ENCODE measurements at regions of chr3 and their contacts with region 1.

Region 1: GRCh38 chr3:108006077-108006771 is 84.6 kb downstream of the CD47 start:
- DNase-seq: peak; percentile 86 to 92
- H3K4me3 ChIP-seq: peak overlapping the region; percentile 15; the same call in 1 of the 2 replicates
- H3K27ac ChIP-seq: peak overlapping the region; percentile 19; the same call in 1 of the 2 replicates
- H3K4me1 ChIP-seq: peaks cover 42% of the 10 kb centered on the region
- H3K27me3 ChIP-seq: no peaks in the 10 kb centered on the region
- CTCF ChIP-seq: no peak

Region 2: DNA sequence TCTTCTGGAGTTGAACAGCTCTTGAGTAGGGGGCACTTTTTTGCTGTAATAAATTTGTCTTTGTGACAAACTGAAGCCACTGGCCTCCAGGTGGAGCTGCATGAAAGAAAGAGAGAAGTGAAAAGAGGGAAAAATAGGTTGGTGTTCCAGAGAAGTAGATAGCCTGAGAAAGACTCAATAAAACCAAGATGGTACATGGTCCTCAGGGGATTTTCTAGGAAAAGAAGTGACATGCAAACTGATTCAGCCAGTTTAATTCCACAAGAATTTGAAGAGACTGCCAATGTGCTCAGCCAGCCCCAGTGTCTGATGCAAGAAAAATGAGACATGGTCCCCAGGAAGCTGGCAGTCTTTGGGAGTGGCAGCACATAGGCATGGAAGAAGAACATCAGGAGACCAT is 68.1 kb before region 1 on chr3:
- CTCF ChIA-PET with region 1: no interaction called
- POLR2A ChIA-PET with region 1: no interaction called
- intact Hi-C with region 1: loop called (anchors 2 kb)
- DNase-seq: peak; percentile 48 to 58
- H3K4me3 ChIP-seq: no peak overlapping the region
- H3K27ac ChIP-seq: no peak overlapping the region
- H3K4me1 ChIP-seq: no peaks in the 10 kb centered on the region
- H3K27me3 ChIP-seq: no peaks in the 10 kb centered on the region
- CTCF ChIP-seq: peak; percentile 89

Region 3: DNA sequence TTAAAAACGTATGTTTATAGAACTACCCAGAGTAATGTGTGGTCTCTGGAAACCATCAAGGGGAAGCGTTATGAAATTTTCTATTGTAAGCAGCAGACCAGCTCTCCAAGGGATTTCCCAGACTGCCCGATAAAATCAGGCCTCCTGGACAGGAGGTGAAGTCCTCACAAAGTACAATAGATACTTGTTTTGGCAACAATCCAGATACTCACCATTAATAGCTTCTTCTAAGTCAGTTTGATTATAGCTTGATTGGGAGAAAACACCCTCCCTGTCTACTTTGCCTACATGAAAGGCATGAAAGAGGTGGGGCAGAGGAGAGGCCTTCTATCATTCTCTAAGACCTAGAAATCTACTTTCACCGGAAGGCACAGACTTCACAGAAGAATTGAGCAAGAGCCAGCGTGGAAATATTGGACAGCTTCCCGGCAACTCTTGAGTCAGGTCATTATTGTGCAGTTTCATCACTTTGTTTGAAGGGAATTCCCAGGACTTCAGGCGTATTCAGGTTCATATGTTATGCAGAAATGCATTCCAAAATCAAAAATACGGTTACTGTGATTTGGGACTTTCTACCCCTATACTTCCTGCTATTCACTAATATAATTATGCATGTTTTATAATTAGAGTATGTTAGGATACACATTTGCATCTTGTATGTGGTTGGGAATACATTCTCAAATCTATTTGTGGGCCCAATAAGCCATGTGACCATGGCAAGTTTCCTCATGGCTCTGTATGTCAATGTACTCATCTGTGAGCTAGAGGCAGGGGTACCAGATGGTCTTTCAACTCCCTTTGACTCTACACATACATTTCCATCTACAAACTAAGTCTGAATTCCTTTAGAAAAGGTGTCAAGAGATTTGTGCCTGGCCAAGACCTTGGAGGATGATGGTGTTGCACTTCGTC is 18.9 kb before region 1 on chr3:
- CTCF ChIA-PET with region 1: no interaction called
- POLR2A ChIA-PET with region 1: no interaction called
- intact Hi-C with region 1: loop called (anchors 2 kb)
- DNase-seq: peak; percentile 81 to 97
- H3K4me3 ChIP-seq: no peak overlapping the region
- H3K27ac ChIP-seq: peak overlapping the region; percentile 83
- H3K4me1 ChIP-seq: peaks cover 56% of the 10 kb centered on the region
- H3K27me3 ChIP-seq: no peaks in the 10 kb centered on the region
- CTCF ChIP-seq: no peak

Region 4: DNA sequence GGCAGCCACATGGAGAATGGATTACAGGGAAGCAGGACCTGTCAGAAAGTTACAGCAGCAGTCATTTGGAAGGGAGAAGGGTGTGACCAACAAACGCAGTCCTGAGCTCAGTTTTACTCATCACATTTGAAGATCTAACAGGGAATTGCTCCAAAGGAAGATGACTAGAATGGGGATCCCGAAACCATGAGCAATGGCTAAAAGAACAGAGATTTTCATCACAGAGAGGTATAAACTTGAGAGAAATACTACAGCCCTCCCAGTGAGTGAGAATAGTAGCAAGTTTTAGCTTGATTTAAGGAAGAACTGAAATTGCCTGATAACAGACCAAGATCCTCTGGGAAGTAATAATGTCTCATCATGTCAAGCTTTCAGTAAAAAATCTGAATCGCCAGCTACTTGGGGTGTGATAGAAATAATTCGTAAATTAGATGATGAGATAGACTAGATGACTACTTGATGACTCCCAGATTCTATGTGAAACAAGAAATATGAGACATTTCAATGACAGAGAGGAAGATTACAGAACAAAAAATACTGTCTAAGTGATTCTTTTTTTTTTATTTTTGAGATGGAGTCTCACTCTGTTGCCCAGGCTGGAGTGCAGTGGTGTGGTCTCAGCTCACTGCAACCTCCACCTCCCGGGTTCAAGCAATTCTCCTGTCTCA is 67.7 kb after region 1 on chr3:
- CTCF ChIA-PET with region 1: no interaction called
- POLR2A ChIA-PET with region 1: no interaction called
- intact Hi-C with region 1: no loop called
- DNase-seq: no peak
- H3K4me3 ChIP-seq: no peak overlapping the region
- H3K27ac ChIP-seq: no peak overlapping the region
- H3K4me1 ChIP-seq: no peaks in the 10 kb centered on the region
- H3K27me3 ChIP-seq: no peaks in the 10 kb centered on the region
- CTCF ChIP-seq: no peak

Region 5: DNA sequence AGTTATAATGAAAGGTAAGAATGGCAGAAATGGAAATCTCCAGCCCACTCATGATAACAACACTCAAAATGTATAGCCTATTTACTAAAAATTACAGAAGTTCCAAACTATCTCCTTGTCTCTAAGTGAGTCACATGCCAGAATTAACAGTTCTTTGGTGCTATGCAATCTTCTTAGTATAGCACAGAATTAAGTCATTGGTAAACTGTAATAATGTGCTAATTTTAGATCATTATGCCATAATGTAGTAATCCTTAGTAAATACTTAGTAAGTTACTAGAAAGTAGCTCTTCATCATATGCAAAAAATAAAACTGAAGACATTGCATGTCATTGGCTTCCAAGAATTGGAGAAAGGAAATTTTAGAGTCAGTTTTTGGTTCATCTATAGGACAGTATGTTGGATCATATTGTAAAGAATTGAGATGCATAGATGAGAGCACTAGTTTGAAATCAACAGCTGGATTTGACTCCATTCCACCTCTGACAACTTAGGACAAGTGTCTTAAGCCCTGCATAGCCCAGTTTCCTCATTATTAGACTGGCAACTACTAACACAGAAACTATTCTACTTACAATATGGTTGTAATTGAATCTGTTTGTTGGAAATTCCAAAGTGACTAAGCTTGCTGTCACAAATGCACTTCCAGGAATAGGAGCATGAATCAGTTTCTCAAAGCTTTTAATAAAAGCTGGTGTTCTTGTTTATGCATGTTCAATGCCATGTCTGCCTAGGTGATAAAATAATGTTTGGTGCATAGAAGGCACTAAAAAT is 124.7 kb after region 1 on chr3:
- CTCF ChIA-PET with region 1: interaction called, 3 read pairs
- POLR2A ChIA-PET with region 1: no interaction called
- intact Hi-C with region 1: loop called (anchors 1 kb)
- DNase-seq: peak; percentile 15 to 99
- H3K4me3 ChIP-seq: no peak overlapping the region
- H3K27ac ChIP-seq: peak overlapping the region; percentile 84
- H3K4me1 ChIP-seq: peaks cover 46% of the 10 kb centered on the region
- H3K27me3 ChIP-seq: no peaks in the 10 kb centered on the region
- CTCF ChIP-seq: no peak

Region 6: DNA sequence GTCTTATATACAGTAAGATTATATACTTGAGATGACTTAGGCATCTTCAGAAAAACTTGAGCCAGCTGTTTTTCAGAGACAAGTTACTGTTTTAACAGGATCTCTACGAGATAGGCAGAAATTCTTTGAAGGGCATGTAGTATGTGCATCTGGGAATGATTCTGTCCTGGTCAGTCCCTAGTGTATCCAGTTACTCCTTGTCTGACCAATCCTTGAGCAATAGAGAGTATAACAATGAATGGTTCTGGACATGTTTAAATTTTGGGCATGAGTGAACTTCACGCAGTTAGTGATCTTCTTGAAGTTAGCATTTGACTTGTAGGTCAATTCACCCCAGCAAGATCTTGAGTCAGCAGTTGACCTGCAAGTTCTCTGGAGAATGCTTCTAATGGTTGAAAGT is 265.4 kb after region 1 on chr3:
- CTCF ChIA-PET with region 1: no interaction called
- POLR2A ChIA-PET with region 1: no interaction called
- intact Hi-C with region 1: no loop called
- DNase-seq: peak in 1 of 2 experiments; percentile 28
- H3K4me3 ChIP-seq: no peak overlapping the region
- H3K27ac ChIP-seq: no peak overlapping the region
- H3K4me1 ChIP-seq: no peaks in the 10 kb centered on the region
- H3K27me3 ChIP-seq: no peaks in the 10 kb centered on the region
- CTCF ChIP-seq: no peak

Region 7: GRCh38 chr3:108301695-108302404 is 295.6 kb after region 1 on chr3:
- CTCF ChIA-PET with region 1: no interaction called
- POLR2A ChIA-PET with region 1: no interaction called
- intact Hi-C with region 1: loop called (anchors 1 kb)
- DNase-seq: peak in 1 of 2 experiments; percentile 46
- H3K4me3 ChIP-seq: no peak overlapping the region
- H3K27ac ChIP-seq: no peak overlapping the region
- H3K4me1 ChIP-seq: no peaks in the 10 kb centered on the region; the same call in 1 of the 2 replicates
- H3K27me3 ChIP-seq: no peaks in the 10 kb centered on the region
- CTCF ChIP-seq: no peak

Region 8: GRCh38 chr3:108472001-108472591 is 465.9 kb after region 1 on chr3:
- CTCF ChIA-PET with region 1: no interaction called
- POLR2A ChIA-PET with region 1: no interaction called
- intact Hi-C with region 1: loop called (anchors 5 kb)
- DNase-seq: peak; percentile 49 to 94
- H3K4me3 ChIP-seq: peak overlapping the region; percentile 3; the same call in 1 of the 2 replicates
- H3K27ac ChIP-seq: peak overlapping the region; percentile 85
- H3K4me1 ChIP-seq: peaks cover 63% of the 10 kb centered on the region
- H3K27me3 ChIP-seq: no peaks in the 10 kb centered on the region
- CTCF ChIP-seq: no peak

Region 9: DNA sequence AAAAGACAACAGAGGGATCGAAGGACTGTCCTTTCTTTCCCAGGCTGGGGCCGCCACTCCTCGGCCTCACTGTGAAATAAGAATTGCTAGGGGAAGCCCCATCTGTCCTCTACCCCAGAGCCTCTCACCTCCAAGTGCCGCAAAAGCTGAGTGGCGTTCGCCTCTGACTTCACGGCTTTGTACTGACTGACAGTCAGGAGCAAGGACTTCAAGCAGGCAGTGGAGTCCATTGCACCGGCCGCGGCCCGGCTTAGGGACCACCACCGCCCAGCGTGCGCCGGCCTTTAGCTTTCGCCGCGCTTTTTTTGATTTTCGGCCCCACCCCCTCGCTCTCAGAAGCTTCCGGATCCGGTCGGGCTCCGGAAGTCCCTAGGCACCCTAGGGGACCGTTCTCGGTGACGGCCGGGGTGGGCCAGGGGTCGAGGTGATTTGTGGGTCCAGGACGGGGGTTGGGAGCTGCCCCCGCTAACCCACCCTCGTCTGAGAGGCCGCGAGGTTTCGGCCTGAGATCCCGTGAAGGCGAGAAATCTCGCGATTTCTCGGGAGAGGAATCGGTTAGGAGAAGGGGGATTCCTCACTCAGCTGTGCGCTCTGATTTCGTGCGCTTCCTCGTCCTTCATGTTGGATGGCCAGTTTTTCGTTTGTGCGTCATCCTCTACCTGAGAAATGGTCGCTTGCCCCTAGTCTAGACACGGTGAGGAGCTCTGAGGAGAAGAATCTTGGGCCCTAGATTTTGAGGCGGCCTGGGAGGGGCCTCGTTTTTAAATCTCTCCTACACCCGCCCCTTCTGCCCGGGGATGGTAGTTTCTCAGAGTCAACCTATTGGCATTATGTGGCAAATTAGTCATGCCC is 583.1 kb after region 1 on chr3 and contains the starts of genes CIP2A and DZIP3:
- CTCF ChIA-PET with region 1: no interaction called
- POLR2A ChIA-PET with region 1: interaction called, 11 read pairs
- intact Hi-C with region 1: no loop called
- DNase-seq: peak; percentile 92 to 97
- H3K4me3 ChIP-seq: peak within 1 kb of the TSS; percentile 74
- H3K27ac ChIP-seq: peak within 1 kb of the TSS; percentile 93
- H3K4me1 ChIP-seq: peaks cover 36% of the 10 kb centered on the region
- H3K27me3 ChIP-seq: no peaks in the 10 kb centered on the region
- CTCF ChIP-seq: no peak
- total RNA-seq, gene CIP2A: 40.6 and 41.1 TPM in 2 replicates
- total RNA-seq, gene DZIP3: 11.7 and 14.5 TPM in 2 replicates